Activated naive CD4-positive, alpha-beta T cell treated with anti-CD3 and anti-CD28 coated beads for 36 hours (primary cell): ENCODE measurements at regions of chr6 and their contacts with region 1.

Region 1: GRCh38 chr6:108630050-108630714 is 69.5 kb downstream of the FOXO3 start:
- DNase-seq: peak; percentile 37
- H3K4me3 Mint-ChIP-seq: no peak overlapping the region
- H3K27ac Mint-ChIP-seq: peak overlapping the region; percentile 35
- H3K4me1 Mint-ChIP-seq: peaks cover 45% of the 10 kb centered on the region
- H3K27me3 Mint-ChIP-seq: no peaks in the 10 kb centered on the region

Region 2: DNA sequence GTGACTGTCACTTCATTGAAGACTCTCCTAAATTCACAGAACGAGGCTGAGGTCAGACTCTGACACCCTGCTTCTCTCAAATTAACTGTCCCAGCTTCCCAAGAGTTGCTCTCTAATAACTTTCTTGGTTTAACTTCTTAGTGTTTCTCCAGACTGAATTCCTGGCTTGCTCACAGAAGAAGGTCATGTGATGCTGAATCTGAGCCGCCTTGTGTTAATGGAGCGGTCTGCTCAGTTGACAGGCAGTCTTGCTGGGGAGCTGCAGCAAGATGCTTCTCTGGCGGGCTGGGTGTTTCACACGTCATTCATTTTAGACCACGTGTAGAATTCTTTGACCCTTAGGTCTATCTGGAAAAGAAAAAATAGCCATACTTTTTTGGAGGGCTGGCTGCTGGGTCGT is 37.8 kb after region 1 on chr6:
- CTCF ChIA-PET with region 1: no interaction called
- intact Hi-C with region 1: loop called (anchors 2 kb)
- DNase-seq: no peak
- H3K4me3 Mint-ChIP-seq: no peak overlapping the region
- H3K27ac Mint-ChIP-seq: no peak overlapping the region
- H3K4me1 Mint-ChIP-seq: peaks cover 44% of the 10 kb centered on the region
- H3K27me3 Mint-ChIP-seq: no peaks in the 10 kb centered on the region